Sigmoid colon (tissue), 7 donors: ENCODE measurements at regions of chr2 and their contacts with region 1.

Region 1: DNA sequence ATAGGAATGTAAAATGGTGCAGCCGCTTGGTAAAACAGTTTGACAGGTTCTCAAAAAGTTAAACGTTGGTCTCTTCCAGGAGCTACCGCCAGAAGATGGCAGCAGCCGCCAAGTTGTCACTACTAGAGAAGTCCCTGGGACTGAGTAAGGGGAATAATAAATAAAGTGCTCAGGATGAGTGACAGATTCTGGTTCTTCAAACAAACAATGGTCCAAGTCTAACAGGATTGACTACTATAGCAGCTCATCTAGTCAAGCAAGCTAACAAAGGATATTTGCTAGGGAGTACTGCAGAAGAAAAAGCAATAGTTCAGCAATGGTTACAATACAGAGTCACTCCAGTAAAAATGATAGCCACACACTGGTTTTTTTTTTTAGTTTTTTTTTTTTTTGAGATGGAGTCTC is 3.8 kb upstream of the ANAPC1 start:
- DNase-seq: peak; percentile 74
- H3K4me3 ChIP-seq: no peak overlapping the region
- H3K27ac ChIP-seq: no peak overlapping the region
- H3K4me1 ChIP-seq: peaks cover 0 to 14% (median 9%) of the 10 kb centered on the region in 4 donors
- H3K27me3 ChIP-seq: no peaks in the 10 kb centered on the region
- CTCF ChIP-seq: peak; percentile 21 to 57 (median 41)
- EP300 ChIP-seq: no peak
- POLR2A ChIP-seq: no peak

Region 2: GRCh38 chr2:112048887-112049286 is 161.1 kb after region 1 on chr2:
- intact Hi-C with region 1: loop called (anchors 1 kb)
- DNase-seq: no peak
- H3K4me3 ChIP-seq: no peak overlapping the region
- H3K27ac ChIP-seq: no peak overlapping the region
- H3K4me1 ChIP-seq: peaks cover 0 to 22% (median 9%) of the 10 kb centered on the region in 4 donors
- H3K27me3 ChIP-seq: no peaks in the 10 kb centered on the region
- CTCF ChIP-seq: peak; percentile 65 to 78 (median 72)
- EP300 ChIP-seq: no peak
- POLR2A ChIP-seq: no peak